CD8-positive, alpha-beta T cell (primary cell): ENCODE measurements at regions of chr1 and their contacts with region 1.

Region 1: DNA sequence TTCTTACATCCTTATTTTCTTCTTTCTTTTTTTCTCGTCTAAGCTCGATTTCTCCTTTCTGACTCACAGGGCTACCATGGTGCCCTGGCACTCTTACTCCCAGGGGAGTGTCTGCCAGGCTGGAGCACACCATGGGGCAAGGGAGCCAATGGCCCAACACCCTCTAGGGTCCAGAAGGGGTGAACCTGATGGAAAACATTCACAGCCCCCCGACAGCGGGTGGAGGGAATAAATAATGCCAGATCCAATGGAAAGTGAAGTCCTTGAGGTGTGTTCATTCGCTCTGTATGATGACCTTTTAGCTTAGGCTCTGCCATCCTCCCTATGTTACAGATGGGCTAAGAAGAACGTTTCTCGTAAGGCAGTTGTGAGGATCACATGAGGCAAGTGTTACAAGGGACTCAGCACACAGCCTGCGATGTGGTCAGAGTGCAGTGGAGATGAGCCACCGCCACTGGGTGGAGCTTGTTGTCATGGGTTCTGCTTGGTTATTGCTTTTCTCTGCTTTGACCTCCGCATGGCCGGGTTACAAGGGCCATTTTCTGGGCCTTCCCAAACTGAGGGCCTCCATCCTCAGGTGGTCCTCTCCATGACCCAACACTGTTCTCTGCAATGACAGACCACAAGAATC is 3.5 kb upstream of the FCMR start:
- DNase-seq: peak; percentile 49 to 90 (median 70)
- ATAC-seq: peak; percentile 40
- H3K4me3 ChIP-seq: no peak overlapping the region
- H3K4me3 Mint-ChIP-seq: no peak overlapping the region
- H3K27ac ChIP-seq: peak overlapping the region; percentile 46 to 95
- H3K27ac Mint-ChIP-seq: no peak overlapping the region
- H3K4me1 ChIP-seq: peaks cover 62% of the 10 kb centered on the region
- H3K4me1 Mint-ChIP-seq: peaks cover 51% of the 10 kb centered on the region
- H3K27me3 ChIP-seq: no peaks in the 10 kb centered on the region
- H3K27me3 Mint-ChIP-seq: no peaks in the 10 kb centered on the region
- CTCF ChIP-seq: no peak

Region 2: GRCh38 chr1:205775015-205775716 is 1150.1 kb before region 1 on chr1 and contains the start of gene RAB29:
- CTCF ChIA-PET with region 1: no interaction called
- POLR2A ChIA-PET with region 1: no interaction called
- intact Hi-C with region 1: loop called in 1 of 2 experiments (anchors 5 kb)
- DNase-seq: peak; percentile 71 to 95 (median 85)
- ATAC-seq: peak; percentile 86
- H3K4me3 ChIP-seq: peak within 1 kb of the TSS; percentile 81 to 82
- H3K4me3 Mint-ChIP-seq: peak within 1 kb of the TSS; percentile 92
- H3K27ac ChIP-seq: peak within 1 kb of the TSS; percentile 86 to 97
- H3K27ac Mint-ChIP-seq: peak within 1 kb of the TSS; percentile 97
- H3K4me1 ChIP-seq: peaks cover 33% of the 10 kb centered on the region
- H3K4me1 Mint-ChIP-seq: peaks cover 53% of the 10 kb centered on the region
- H3K27me3 ChIP-seq: no peaks in the 10 kb centered on the region
- H3K27me3 Mint-ChIP-seq: no peaks in the 10 kb centered on the region
- CTCF ChIP-seq: no peak
- total RNA-seq, gene RAB29: 14.0 to 15.9 TPM

Region 3: GRCh38 chr1:206635080-206635977 is 289.9 kb before region 1 on chr1 and contains the start of gene DYRK3:
- CTCF ChIA-PET with region 1: no interaction called
- POLR2A ChIA-PET with region 1: no interaction called
- intact Hi-C with region 1: loop called in 1 of 2 experiments (anchors 5 kb)
- DNase-seq: peak; percentile 63 to 94 (median 88)
- ATAC-seq: peak; percentile 94
- H3K4me3 ChIP-seq: peak within 1 kb of the TSS; percentile 58 to 79
- H3K4me3 Mint-ChIP-seq: peak within 1 kb of the TSS; percentile 85
- H3K27ac ChIP-seq: peak within 1 kb of the TSS; percentile 9 to 12
- H3K27ac Mint-ChIP-seq: peak within 1 kb of the TSS; percentile 70
- H3K4me1 ChIP-seq: peaks cover 15% of the 10 kb centered on the region
- H3K4me1 Mint-ChIP-seq: peaks cover 16% of the 10 kb centered on the region
- H3K27me3 ChIP-seq: no peaks in the 10 kb centered on the region
- H3K27me3 Mint-ChIP-seq: peaks cover 15% of the 10 kb centered on the region
- CTCF ChIP-seq: no peak
- total RNA-seq, gene DYRK3: 0.94 to 1.4 TPM

Region 4: DNA sequence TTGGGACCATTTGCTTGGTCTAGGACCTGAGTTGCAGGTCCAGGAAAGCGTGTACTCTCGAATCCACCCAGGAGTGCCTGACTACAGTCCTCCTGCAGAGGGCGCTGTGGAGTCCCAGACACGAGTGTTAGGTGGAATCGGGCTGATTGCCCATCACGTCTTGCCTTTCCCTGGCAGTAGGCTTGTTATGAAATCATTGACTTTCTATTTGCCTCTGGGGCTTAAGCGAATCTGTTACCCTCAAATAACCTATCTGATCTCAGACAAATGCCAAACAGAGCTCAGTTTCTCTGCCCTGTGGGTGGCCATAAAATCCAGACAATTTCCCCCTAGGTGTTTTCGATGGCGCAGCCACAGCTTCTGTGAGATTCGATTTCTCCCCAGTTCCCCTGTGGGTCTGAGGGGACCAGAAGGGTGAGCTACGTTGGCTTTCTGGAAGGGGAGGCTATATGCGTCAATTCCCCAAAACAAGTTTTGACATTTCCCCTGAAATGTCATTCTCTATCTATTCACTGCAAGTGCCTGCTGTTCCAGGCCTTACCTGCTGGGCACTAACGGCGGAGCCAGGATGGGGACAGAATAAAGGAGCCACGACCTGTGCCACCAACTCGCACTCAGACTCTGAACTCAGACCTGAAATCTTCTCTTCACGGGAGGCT is 60.1 kb before region 1 on chr1 and contains the start of gene IL20:
- CTCF ChIA-PET with region 1: interaction called, 84 read pairs
- POLR2A ChIA-PET with region 1: no interaction called
- intact Hi-C with region 1: no loop called
- DNase-seq: peak; percentile 72 to 93 (median 86)
- ATAC-seq: peak; percentile 97
- H3K4me3 ChIP-seq: no peak within 1 kb of the TSS
- H3K4me3 Mint-ChIP-seq: no peak within 1 kb of the TSS
- H3K27ac ChIP-seq: no peak within 1 kb of the TSS
- H3K27ac Mint-ChIP-seq: no peak within 1 kb of the TSS
- H3K4me1 ChIP-seq: peaks cover 7% of the 10 kb centered on the region
- H3K4me1 Mint-ChIP-seq: peaks cover 7% of the 10 kb centered on the region
- H3K27me3 ChIP-seq: no peaks in the 10 kb centered on the region
- H3K27me3 Mint-ChIP-seq: no peaks in the 10 kb centered on the region
- CTCF ChIP-seq: peak; percentile 91
- total RNA-seq, gene IL20: not detected

Region 5: GRCh38 chr1:206905280-206906164 is 19.7 kb before region 1 on chr1:
- CTCF ChIA-PET with region 1: interaction called, 75 read pairs
- POLR2A ChIA-PET with region 1: interaction called, 312 read pairs
- intact Hi-C with region 1: loop called in 1 of 2 experiments (anchors 2 kb)
- DNase-seq: peak in 4 of 9 experiments; percentile 34 to 56 (median 44)
- ATAC-seq: peak; percentile 51
- H3K4me3 ChIP-seq: peak overlapping the region in 1 of 2 experiments; percentile 7
- H3K4me3 Mint-ChIP-seq: peak overlapping the region; percentile 66
- H3K27ac ChIP-seq: peak overlapping the region; percentile 5 to 55
- H3K27ac Mint-ChIP-seq: peak overlapping the region; percentile 94
- H3K4me1 ChIP-seq: peaks cover 68% of the 10 kb centered on the region
- H3K4me1 Mint-ChIP-seq: peaks cover 87% of the 10 kb centered on the region
- H3K27me3 ChIP-seq: no peaks in the 10 kb centered on the region
- H3K27me3 Mint-ChIP-seq: no peaks in the 10 kb centered on the region
- CTCF ChIP-seq: no peak

Region 6: GRCh38 chr1:206967096-206967849 is 42.1 kb after region 1 on chr1:
- CTCF ChIA-PET with region 1: no interaction called
- POLR2A ChIA-PET with region 1: no interaction called
- intact Hi-C with region 1: no loop called
- DNase-seq: peak in 1 of 9 experiments; percentile 25
- ATAC-seq: no peak
- H3K4me3 ChIP-seq: no peak overlapping the region
- H3K4me3 Mint-ChIP-seq: no peak overlapping the region
- H3K27ac ChIP-seq: no peak overlapping the region
- H3K27ac Mint-ChIP-seq: peak overlapping the region; percentile 14
- H3K4me1 ChIP-seq: peaks cover 18% of the 10 kb centered on the region
- H3K4me1 Mint-ChIP-seq: peaks cover 26% of the 10 kb centered on the region
- H3K27me3 ChIP-seq: no peaks in the 10 kb centered on the region
- H3K27me3 Mint-ChIP-seq: no peaks in the 10 kb centered on the region
- CTCF ChIP-seq: no peak

Region 7: GRCh38 chr1:207040181-207040533 is 114.9 kb after region 1 on chr1:
- CTCF ChIA-PET with region 1: no interaction called
- POLR2A ChIA-PET with region 1: no interaction called
- intact Hi-C with region 1: no loop called
- DNase-seq: no peak
- ATAC-seq: no peak
- H3K4me3 ChIP-seq: no peak overlapping the region
- H3K4me3 Mint-ChIP-seq: no peak overlapping the region
- H3K27ac ChIP-seq: no peak overlapping the region
- H3K27ac Mint-ChIP-seq: no peak overlapping the region
- H3K4me1 ChIP-seq: peaks cover 6% of the 10 kb centered on the region
- H3K4me1 Mint-ChIP-seq: peaks cover 25% of the 10 kb centered on the region
- H3K27me3 ChIP-seq: no peaks in the 10 kb centered on the region
- H3K27me3 Mint-ChIP-seq: no peaks in the 10 kb centered on the region
- CTCF ChIP-seq: no peak

Region 8: GRCh38 chr1:207052911-207053769 is 127.9 kb after region 1 on chr1 and contains the start of gene PFKFB2:
- CTCF ChIA-PET with region 1: no interaction called
- POLR2A ChIA-PET with region 1: no interaction called
- intact Hi-C with region 1: loop called (anchors 2 to 5 kb)
- DNase-seq: peak; percentile 88 to 97 (median 95)
- ATAC-seq: peak; percentile 87
- H3K4me3 ChIP-seq: peak within 1 kb of the TSS; percentile 70 to 82
- H3K4me3 Mint-ChIP-seq: peak within 1 kb of the TSS; percentile 97
- H3K27ac ChIP-seq: peak within 1 kb of the TSS; percentile 70 to 83
- H3K27ac Mint-ChIP-seq: peak within 1 kb of the TSS; percentile 98
- H3K4me1 ChIP-seq: peaks cover 28% of the 10 kb centered on the region
- H3K4me1 Mint-ChIP-seq: peaks cover 44% of the 10 kb centered on the region
- H3K27me3 ChIP-seq: no peaks in the 10 kb centered on the region
- H3K27me3 Mint-ChIP-seq: no peaks in the 10 kb centered on the region
- CTCF ChIP-seq: peak; percentile 21
- total RNA-seq, gene PFKFB2: 8.1 to 8.5 TPM